ENCODE measurements at regions of chr12 and their contacts with region 1.

Region 1: DNA sequence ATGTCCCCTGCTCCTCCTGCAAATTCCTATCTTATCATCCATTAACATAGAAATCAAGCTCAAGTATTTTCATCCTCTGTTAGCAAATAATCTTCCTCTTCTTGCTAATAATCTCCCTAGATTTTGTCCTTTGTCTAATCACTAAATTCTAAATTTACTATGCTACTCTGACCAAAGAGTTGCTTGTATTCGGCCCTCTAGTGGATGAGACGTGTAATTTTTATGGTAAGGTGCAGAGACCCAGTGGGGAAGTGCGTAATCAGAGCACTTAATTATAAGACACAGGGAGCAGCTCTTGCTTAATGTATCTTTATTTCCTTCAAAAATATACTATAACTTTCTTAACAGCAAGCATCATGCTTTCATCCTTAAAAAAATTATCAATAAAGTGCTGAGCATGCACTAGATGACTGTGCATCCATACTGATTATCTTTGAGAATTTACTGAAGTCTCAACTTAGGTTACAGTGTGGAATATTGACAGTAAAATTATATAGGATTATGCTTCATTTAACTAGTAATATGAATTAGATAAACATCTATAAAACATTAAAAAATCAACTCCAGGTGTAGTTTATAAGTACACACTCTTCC is 212.6 kb downstream of the SLC16A7 start:
- DNase-seq: no peak

Region 2: GRCh38 chr12:59403259-59403932 is 405.0 kb before region 1 on chr12:
- intact Hi-C with region 1: loop called (anchors 10 kb)
- DNase-seq: peak in 6 of 10 donors; percentile 10 to 85 (median 44)